Mammary epithelial cell (primary cell): ENCODE measurements at regions of chr11 and their contacts with region 1.

Region 1: GRCh38 chr11:46686886-46687795 is 13.3 kb downstream of the ARHGAP1 start:
- DNase-seq: peak; percentile 97
- H3K4me3 ChIP-seq: no peak overlapping the region
- H3K27ac ChIP-seq: peak overlapping the region; percentile 95
- H3K4me1 ChIP-seq: peaks cover 33% of the 10 kb centered on the region
- H3K27me3 ChIP-seq: no peaks in the 10 kb centered on the region
- CTCF ChIP-seq: no peak

Region 2: DNA sequence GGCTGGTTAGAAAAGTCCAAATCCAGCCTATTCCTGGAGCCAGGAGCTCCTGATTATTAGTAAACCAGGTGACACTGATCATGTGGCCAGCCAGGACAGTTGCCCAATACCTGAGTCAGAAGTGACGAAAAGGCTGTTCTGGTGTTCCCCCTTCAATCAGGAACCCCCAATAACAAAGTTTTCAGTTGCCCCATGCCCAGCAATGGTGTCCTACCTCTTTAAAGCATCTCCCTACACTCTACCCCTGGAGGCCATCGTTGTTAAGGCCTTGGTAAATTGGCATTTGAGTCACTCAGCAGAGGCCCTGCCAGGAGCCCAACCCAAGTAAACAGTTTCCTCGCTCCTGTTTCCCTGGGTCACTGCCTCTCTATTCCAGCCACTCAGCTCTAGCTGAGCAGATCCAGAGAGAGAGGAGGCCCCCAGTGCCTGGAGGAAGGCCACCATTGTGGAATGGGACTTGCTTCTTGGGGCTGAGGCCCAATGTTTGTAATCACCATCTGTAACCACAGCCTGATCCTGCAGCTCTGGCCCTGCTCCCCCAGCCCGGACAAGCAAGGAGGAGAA is 11.8 kb before region 1 on chr11:
- CTCF ChIA-PET with region 1: no interaction called
- dilution Hi-C with region 1: no loop called
- in situ Hi-C with region 1: no loop called
- intact Hi-C with region 1: loop called (anchors 1 kb)
- DNase-seq: peak; percentile 64
- H3K4me3 ChIP-seq: no peak overlapping the region
- H3K27ac ChIP-seq: peak overlapping the region; percentile 57
- H3K4me1 ChIP-seq: peaks cover 17% of the 10 kb centered on the region
- H3K27me3 ChIP-seq: no peaks in the 10 kb centered on the region
- CTCF ChIP-seq: peak in 1 of 2 donors; percentile 33

Region 3: GRCh38 chr11:46700241-46701077 is 13.3 kb after region 1 on chr11 and contains the starts of genes ARHGAP1 and ZNF408:
- CTCF ChIA-PET with region 1: no interaction called
- dilution Hi-C with region 1: no loop called
- in situ Hi-C with region 1: no loop called
- intact Hi-C with region 1: loop called (anchors 1 kb)
- DNase-seq: peak; percentile 98
- H3K4me3 ChIP-seq: peak within 1 kb of the TSS; percentile 81 to 97 (median 92)
- H3K27ac ChIP-seq: peak within 1 kb of the TSS; percentile 91
- H3K4me1 ChIP-seq: peaks cover 7% of the 10 kb centered on the region
- H3K27me3 ChIP-seq: no peaks in the 10 kb centered on the region
- CTCF ChIP-seq: no peak
- total RNA-seq, gene ARHGAP1: 57.2 to 123 TPM
- total RNA-seq, gene ZNF408: 12.6 to 15.2 TPM